Calu3 (cell line): ENCODE measurements at regions of chr20 and their contacts with region 1.

Region 1: DNA sequence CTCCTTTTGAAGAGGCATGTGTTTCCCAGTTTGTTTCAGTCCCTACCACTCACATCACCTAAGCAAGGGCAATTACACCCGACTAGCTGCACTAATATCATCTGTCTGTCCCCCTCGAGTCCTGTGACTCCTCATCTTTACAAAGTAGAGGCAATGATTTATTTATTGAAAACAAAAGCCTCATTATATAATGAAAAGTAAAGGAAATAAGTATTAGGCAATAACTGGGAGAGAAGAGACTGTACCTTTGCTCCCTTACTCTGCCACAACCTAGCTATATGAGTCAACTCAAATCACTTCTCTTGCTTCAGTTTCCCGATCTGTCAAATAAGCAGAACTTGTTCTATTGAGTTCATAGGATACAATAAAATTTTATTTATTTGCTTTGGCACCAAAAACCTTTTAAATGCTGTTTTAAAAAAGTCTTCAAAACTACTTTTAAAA is 38.9 kb downstream of the CSNK2A1 start:
- DNase-seq: no peak
- H3K4me3 Mint-ChIP-seq: no peak overlapping the region
- H3K27ac Mint-ChIP-seq: no peak overlapping the region
- H3K4me1 Mint-ChIP-seq: no peaks in the 10 kb centered on the region
- H3K27me3 Mint-ChIP-seq: no peaks in the 10 kb centered on the region
- CTCF ChIP-seq: no peak

Region 2: DNA sequence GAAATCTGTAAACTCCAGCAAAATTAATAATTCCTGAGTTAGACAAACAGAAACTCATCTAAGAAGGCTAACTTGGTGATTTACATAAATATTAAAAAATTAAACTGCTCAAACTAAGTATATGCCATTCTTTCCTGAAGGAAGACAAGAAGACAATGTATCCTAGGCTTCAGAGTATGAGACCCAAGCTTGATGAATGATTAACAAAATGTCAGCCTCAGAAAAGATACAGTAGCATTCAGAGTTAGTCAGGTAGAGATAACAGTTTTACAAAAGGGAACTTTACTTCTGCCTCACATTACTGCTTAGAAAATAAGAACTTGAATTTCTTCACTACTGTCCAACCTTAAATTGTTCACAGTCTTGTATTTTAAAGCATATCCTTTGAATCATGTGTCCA is 27.0 kb after region 1 on chr20:
- CTCF ChIA-PET with region 1: no interaction called
- intact Hi-C with region 1: loop called (anchors 1 kb)
- DNase-seq: no peak
- H3K4me3 Mint-ChIP-seq: no peak overlapping the region
- H3K27ac Mint-ChIP-seq: no peak overlapping the region
- H3K4me1 Mint-ChIP-seq: peaks cover 29% of the 10 kb centered on the region
- H3K27me3 Mint-ChIP-seq: no peaks in the 10 kb centered on the region
- CTCF ChIP-seq: no peak